GM13977 (cell line): ENCODE measurements at regions of chr2 and their contacts with region 1.

Region 1: DNA sequence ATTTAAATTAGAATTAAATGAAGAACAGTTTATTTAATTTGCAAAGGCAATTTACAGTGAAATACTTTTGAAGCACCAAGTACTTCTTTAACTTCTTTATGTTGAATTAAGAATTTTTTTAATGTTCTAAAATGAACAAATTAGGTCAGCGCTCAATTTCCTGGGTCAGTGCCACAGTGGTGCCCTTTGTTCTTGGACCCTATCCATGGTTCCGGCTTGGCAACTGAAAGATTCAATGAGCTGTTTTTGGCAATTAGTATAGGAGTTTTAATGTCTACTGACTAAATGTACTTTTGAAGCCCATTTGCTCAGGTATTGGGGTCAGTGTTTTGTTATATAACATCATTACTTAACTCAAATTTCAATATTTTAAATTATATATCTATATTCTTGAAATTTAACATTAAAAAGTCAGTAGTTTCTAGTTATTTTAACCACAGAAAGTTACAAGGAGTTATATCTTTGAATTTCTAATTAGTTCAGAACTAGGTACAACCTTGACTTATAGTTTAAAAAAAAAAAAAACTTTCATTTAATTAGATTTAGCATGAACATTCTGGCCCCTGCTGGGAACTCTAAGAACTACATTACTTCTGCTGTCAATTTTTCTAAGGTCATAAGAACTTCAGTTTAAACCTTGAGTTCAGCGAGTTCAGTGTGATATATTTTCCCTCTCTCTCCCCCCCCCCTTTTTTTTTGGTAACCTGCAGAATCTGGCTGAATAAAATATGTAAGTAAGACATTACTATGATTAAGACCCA is 7.6 kb upstream of the MSTN start:
- DNase-seq: peak; percentile 17
- CTCF ChIP-seq: peak; percentile 63

Region 2: DNA sequence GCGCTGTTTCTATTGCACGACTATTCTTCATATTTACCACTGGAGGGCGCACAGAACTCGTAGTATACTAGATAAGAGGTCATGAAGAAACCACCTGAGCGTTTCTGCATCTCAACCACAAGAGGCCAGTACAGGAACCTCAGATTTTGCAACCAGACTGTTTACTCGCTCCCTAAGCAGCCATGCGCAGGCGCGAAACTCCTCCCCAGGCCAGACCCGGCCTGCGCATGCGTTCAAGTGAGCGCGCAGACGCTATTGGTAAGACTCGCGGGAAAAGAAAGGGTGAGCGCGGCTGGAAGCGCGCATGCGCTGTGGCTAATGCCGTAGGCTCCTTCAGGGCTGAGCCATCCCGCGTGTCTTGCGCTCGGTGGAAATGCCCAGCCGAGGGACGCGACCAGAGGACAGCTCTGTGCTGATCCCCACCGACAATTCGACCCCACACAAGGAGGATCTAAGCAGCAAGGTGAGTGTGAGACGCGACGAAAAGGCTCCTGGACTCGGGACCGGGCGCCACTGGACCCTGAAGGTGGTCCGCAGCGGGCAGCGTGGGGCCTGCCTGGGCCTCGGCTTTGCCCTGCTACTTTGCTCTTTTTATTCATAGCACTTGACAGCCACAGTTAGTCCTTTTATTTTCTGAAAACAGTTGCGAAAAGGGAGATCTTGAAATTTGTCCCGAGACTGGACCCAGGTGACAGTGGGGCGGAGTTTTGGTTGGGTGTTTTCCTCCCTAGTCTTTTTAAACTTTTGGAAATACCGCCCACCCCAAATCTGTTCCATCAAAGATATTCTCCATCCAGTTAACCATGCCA is 408.8 kb before region 1 on chr2 and contains the start of gene ASNSD1:
- in situ Hi-C with region 1: loop called (anchors 25 kb)
- DNase-seq: peak; percentile 95
- CTCF ChIP-seq: peak; percentile 84

Region 3: GRCh38 chr2:189798312-189799029 is 271.6 kb before region 1 on chr2:
- in situ Hi-C with region 1: loop called (anchors 10 kb)
- DNase-seq: peak; percentile 28
- CTCF ChIP-seq: peak; percentile 54